Activated CD8-positive, alpha-beta T cell treated with anti-CD3 and anti-CD28 coated beads for 36 hours (primary cell): ENCODE measurements at regions of chr4 and their contacts with region 1.

Region 1: GRCh38 chr4:185395956-185396723 is 416 bp upstream of the LRP2BP start:
- DNase-seq: peak; percentile 97
- ATAC-seq: peak; percentile 84
- H3K4me3 Mint-ChIP-seq: peak overlapping the region; percentile 94
- H3K27ac Mint-ChIP-seq: peak overlapping the region; percentile 90
- H3K4me1 Mint-ChIP-seq: peaks cover 41% of the 10 kb centered on the region
- H3K27me3 Mint-ChIP-seq: no peaks in the 10 kb centered on the region
- CTCF ChIP-seq: no peak

Region 2: DNA sequence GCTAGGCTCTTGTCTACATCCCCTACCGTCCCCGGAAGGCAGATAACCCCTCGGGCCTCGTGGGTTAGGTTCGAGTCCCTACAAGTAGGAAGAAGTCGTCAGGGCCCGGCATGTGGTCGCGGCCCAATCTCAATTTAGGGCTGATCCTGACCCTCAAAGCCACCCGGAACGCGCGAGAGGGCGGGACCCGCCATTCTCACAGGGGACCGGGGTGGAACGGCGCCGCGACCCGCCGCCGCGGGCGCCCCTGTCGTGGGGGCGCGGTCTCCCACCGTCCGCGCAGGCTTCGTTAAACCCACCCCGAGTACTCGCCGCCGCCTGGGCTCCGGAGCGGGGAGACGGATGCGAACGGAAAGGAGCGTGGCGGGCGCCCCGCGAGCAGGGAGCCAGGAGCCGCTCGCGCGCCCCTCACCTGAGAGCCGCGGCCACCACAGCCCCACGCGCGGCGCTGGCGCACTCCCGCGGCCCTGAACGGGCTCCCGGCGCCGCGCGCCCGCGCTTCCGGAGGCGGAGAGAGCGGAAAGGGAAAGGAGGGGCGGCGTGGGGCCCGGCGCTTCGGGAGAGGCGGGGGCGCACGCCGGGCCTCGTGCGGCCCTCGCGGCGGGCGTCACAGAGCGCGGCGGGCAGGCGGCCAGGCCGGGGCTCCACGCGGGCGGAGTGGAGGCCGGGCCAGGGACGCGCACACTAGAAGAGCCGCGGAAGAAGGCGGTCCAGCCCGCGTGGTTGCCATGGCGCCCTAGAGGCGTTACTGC is 192.5 kb before region 1 on chr4 and contains the start of gene CFAP97:
- CTCF ChIA-PET with region 1: no interaction called
- POLR2A ChIA-PET with region 1: interaction called, 8 read pairs
- intact Hi-C with region 1: loop called (anchors 10 kb)
- DNase-seq: peak; percentile 80
- ATAC-seq: peak; percentile 84
- H3K4me3 Mint-ChIP-seq: peak within 1 kb of the TSS; percentile 78
- H3K27ac Mint-ChIP-seq: peak within 1 kb of the TSS; percentile 97
- H3K4me1 Mint-ChIP-seq: peaks cover 38% of the 10 kb centered on the region
- H3K27me3 Mint-ChIP-seq: no peaks in the 10 kb centered on the region
- CTCF ChIP-seq: no peak
- total RNA-seq, gene CFAP97: 48.5 to 50.3 TPM

Region 3: DNA sequence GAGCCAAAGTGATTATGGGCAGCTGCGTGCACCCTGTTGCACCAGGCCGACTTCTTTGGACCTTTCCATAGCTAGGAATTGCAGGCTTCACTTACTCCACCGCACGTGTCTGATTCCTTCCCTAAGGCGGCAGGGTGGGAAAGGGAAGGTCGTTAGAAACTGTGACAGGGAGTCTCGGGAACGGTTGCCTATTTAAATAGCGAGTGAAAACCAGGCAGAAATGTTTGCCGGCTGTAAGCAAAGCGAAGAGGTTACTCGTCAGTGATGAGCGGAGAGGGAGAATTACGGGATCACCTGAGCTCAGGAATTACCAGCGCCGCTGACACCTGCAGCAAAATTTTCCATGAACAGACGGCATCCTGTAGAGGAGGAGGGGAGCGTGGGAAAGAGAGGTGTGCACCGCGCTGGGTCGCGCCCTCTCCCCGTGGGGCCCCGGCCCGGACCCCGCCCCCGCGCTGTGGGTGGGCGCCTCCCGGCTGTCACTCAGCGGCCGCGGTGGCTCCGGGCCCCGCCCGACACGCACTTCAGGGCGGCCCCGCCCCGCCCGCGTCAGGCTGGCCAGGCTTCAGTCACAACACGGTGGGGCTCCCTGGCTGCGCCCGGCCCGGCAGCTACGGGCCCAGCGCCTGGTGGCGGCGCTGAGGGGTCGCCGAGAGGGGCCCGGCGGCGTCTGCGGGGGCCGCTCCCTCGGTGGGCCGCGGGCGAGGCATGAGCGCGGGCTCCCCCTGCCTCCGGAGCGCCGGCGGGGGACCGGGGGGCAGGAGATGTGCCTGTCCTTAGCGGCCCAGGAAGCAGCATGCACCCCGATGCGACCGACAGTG is 186.9 kb before region 1 on chr4 and contains the start of gene SNX25:
- CTCF ChIA-PET with region 1: no interaction called
- POLR2A ChIA-PET with region 1: interaction called, 10 read pairs
- intact Hi-C with region 1: loop called (anchors 10 kb)
- DNase-seq: peak; percentile 91
- ATAC-seq: peak; percentile 92
- H3K4me3 Mint-ChIP-seq: peak within 1 kb of the TSS; percentile 93
- H3K27ac Mint-ChIP-seq: peak within 1 kb of the TSS; percentile 85
- H3K4me1 Mint-ChIP-seq: peaks cover 37% of the 10 kb centered on the region
- H3K27me3 Mint-ChIP-seq: no peaks in the 10 kb centered on the region
- CTCF ChIP-seq: no peak
- total RNA-seq, gene SNX25: 24.0 to 24.3 TPM